ENCODE measurements at regions of chr1 and their contacts with region 1.

Region 1: DNA sequence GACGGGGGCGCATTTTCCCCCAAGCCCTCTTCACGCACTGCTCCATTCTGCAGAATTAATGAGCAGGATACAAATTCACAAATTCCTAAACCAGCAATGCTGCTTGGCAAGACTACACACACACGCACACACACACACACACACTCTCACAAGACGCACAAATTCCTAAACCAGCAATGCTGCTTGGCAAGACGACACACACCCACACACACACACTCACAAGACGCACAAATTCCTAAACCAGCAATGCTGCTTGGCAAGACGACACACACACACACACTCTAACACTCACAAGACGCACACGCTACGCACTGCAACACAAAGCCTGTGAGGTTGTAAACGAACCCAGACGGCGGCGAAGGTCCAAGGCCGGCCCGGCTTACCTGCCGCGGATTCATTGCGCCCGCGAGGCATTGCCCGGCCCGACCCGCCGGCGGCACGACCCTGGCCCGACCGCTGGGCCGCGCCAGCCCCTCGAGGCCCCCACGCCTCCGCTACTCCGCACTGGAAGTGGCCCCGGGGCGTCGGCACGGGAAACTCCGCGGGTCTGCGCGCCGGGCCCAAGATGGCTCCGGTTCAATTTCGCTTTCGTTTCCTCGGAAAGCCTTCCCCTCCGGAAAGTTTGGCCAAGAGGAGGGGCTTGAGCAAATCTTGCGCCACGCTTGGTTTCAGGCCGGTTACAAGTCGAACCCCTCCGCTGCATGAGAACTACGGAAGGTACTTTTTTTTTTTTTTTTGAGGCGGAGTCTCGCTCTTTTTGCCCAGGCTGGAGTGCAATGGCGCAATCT is at the start of gene ADAR:
- DNase-seq: peak; percentile 95
- H3K4me3 Mint-ChIP-seq: peak within 1 kb of the TSS; percentile 94
- H3K27ac Mint-ChIP-seq: peak within 1 kb of the TSS; percentile 98
- H3K4me1 Mint-ChIP-seq: peaks cover 69% of the 10 kb centered on the region
- H3K27me3 Mint-ChIP-seq: no peaks in the 10 kb centered on the region
- total RNA-seq, gene ADAR: 377 to 398 TPM

Region 2: DNA sequence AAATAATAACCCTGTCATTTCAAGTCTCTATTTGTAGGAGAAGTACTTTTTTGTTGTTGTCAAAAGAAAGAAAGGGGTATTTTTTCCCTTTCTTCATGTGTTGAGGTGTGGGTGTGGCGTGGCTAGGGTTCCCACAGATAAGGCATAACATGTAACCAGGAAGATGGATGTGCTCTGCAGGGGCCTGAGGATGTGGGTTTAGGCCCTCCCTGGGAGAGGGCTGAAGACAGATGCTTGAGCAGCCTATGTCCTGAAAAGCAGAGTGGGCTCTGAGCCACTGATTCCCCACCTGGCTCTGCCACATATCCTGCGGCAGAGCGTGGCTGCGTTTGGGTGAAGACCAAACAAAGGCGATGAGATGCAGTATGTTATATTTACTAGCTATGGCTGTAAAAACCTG is 14.1 kb after region 1 on chr1:
- CTCF ChIA-PET with region 1: interaction called, 5 read pairs
- POLR2A ChIA-PET with region 1: interaction called, 51 read pairs
- DNase-seq: no peak
- H3K4me3 Mint-ChIP-seq: no peak overlapping the region
- H3K27ac Mint-ChIP-seq: no peak overlapping the region
- H3K4me1 Mint-ChIP-seq: peaks cover 42% of the 10 kb centered on the region
- H3K27me3 Mint-ChIP-seq: no peaks in the 10 kb centered on the region

Region 3: DNA sequence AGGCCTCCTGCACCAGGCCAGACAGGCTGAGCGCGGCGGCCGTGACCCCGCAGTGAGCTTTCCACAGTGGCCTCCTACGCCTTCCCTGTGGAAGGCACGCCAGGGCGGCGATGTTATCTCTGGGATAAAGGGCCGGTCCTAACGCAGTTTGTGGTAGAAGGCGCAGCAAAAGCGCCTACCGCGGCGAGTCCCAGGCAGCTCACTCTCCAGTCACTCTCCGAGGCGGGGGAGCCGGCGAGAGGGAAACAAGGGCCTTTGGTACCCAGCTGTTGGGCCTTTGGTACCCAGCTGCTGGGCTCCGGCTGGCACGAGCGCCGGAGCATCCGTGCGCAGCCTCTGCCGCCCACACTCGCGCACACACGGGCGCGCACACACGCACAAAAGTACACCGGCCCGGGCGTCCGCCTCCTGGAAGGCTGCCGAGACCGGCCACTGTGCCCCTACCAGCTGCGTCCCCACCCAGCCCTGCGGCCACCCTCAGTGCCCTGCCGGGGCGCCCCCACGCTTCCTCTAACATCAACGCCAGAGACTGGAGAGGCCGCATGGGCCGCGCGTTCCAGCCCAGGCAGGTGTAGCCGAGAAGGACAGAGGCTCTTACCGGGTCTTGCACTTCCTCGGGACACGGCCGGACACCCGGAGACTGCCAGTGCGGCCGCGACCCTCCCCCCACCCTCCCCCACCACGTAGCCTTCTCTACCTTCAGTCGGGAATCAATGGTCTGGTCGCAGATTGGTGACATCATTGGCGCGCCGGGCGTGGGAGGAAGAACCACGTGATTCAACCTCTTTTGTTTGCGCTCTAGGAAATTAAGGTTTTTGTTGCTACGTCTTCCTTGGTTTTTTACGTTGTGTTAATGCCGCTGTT is 19.7 kb after region 1 on chr1:
- CTCF ChIA-PET with region 1: interaction called, 5 read pairs
- POLR2A ChIA-PET with region 1: interaction called, 51 read pairs
- DNase-seq: peak; percentile 91
- H3K4me3 Mint-ChIP-seq: peak overlapping the region; percentile 99
- H3K27ac Mint-ChIP-seq: peak overlapping the region; percentile 94
- H3K4me1 Mint-ChIP-seq: peaks cover 40% of the 10 kb centered on the region
- H3K27me3 Mint-ChIP-seq: peaks cover 17% of the 10 kb centered on the region

Region 4: GRCh38 chr1:154682254-154682653 is 74.5 kb after region 1 on chr1:
- CTCF ChIA-PET with region 1: no interaction called
- POLR2A ChIA-PET with region 1: no interaction called
- DNase-seq: no peak
- H3K4me3 Mint-ChIP-seq: no peak overlapping the region
- H3K27ac Mint-ChIP-seq: no peak overlapping the region
- H3K4me1 Mint-ChIP-seq: no peaks in the 10 kb centered on the region
- H3K27me3 Mint-ChIP-seq: peaks cover 26% of the 10 kb centered on the region

Measured in activated CD4-positive, alpha-beta memory T cell treated with anti-CD3 and anti-CD28 coated beads, Interleukin-2, amount 10 ng/mL, durations not matched to agents 7 days and 5 days (primary cell).